Activated T-helper 2 cell treated with anti-CD3 and anti-CD28 coated beads, Interferon-gamma antibody, Interleukin-2, Interleukin-4, amounts not matched to agents 10 μg/mL and 5 μg/mL and 100 μg/mL, durations not matched to agents 14 hours and 24 hours and 36 hours (primary cell): ENCODE measurements at regions of chr17 and their contacts with region 1.

Region 1: GRCh38 chr17:70552230-70552981 is 383.1 kb downstream of the KCNJ2 start:
- DNase-seq: no peak
- H3K4me3 Mint-ChIP-seq: no peak overlapping the region
- H3K27ac Mint-ChIP-seq: no peak overlapping the region
- H3K4me1 Mint-ChIP-seq: no peaks in the 10 kb centered on the region
- H3K27me3 Mint-ChIP-seq: no peaks in the 10 kb centered on the region

Region 2: GRCh38 chr17:69523244-69523861 is 1029.1 kb before region 1 on chr17:
- intact Hi-C with region 1: loop called (anchors 10 kb)
- DNase-seq: no peak
- H3K4me3 Mint-ChIP-seq: no peak overlapping the region
- H3K27ac Mint-ChIP-seq: no peak overlapping the region
- H3K4me1 Mint-ChIP-seq: no peaks in the 10 kb centered on the region
- H3K27me3 Mint-ChIP-seq: no peaks in the 10 kb centered on the region

Region 3: DNA sequence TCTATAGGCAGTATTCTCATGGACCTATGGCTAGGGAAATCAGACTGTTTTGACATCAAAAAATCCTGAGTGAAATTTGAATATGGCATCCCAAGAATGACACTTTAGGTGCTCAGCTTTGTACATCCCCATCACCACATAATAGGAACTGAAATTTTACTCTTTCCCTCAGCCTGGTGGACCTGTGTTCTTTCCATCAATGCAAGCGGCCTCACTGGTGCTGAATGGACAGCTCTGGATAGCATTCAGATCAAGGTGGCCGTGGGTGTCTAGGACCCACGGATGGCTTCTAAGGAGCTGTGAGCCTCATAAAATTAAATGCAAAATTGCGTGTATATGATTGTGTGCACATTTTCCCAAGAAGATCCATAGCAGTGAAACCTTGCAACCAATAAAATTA is 985.3 kb before region 1 on chr17:
- intact Hi-C with region 1: loop called (anchors 10 kb)
- DNase-seq: no peak
- H3K4me3 Mint-ChIP-seq: no peak overlapping the region
- H3K27ac Mint-ChIP-seq: no peak overlapping the region
- H3K4me1 Mint-ChIP-seq: peaks cover 3% of the 10 kb centered on the region
- H3K27me3 Mint-ChIP-seq: peaks cover 1% of the 10 kb centered on the region

Region 4: GRCh38 chr17:69607162-69607834 is 945.1 kb before region 1 on chr17:
- intact Hi-C with region 1: loop called (anchors 10 kb)
- DNase-seq: peak; percentile 26
- H3K4me3 Mint-ChIP-seq: no peak overlapping the region
- H3K27ac Mint-ChIP-seq: peak overlapping the region; percentile 23
- H3K4me1 Mint-ChIP-seq: peaks cover 32% of the 10 kb centered on the region
- H3K27me3 Mint-ChIP-seq: no peaks in the 10 kb centered on the region